Sciatic nerve (tissue), 2 donors: ENCODE measurements at regions of chr21 and their contacts with region 1.

Region 1: GRCh38 chr21:43884012-43884860 is 19.2 kb downstream of the AGPAT3 start:
- DNase-seq: no peak
- ATAC-seq: peak; percentile 56

Region 2: DNA sequence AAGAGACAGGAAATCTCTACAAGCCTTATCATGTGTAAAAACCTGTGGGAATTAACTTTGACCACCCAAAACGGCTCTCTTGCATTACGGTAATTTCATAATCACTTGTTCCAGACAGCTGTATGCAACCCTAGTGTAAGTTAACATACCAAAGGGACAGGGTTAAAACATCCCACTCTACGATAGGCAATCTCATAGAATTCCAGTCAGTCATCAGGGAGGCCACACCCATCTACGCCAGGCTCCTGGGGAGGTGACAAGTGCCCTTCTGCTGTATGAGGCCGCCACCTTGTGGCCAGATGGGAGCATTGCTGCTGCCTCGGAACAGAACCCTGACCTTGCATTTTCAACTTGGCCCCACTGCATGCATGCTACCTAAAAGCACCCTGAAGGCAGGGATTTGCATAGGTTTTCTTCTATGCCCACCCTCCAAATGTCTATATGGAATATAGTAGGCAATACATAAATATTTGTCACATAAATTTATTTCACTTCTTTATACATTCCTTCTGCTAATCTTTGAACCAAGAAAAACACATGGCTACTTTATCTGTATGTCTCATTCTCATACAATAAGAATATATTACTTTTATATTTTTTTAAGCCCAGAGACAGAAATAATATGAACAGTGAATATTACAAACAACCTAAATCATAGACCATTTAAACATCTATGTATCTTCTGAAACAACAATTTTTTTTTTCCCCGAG is 237.5 kb before region 1 on chr21:
- intact Hi-C with region 1: no loop called
- DNase-seq: peak; percentile 94
- ATAC-seq: peak; percentile 96

Region 3: GRCh38 chr21:43939443-43940328 is 55.5 kb after region 1 on chr21:
- intact Hi-C with region 1: loop called (anchors 10 kb)
- DNase-seq: no peak
- ATAC-seq: no peak